ENCODE measurements at regions of chr3 and their contacts with region 1.

Region 1: GRCh38 chr3:14410503-14411165 is 8.2 kb downstream of the SLC6A6 start:
- DNase-seq: peak; percentile 61
- ATAC-seq: peak; percentile 64
- H3K4me3 ChIP-seq: no peak overlapping the region
- H3K27ac ChIP-seq: peak overlapping the region; percentile 61; the same call in 1 of the 2 replicates
- H3K4me1 ChIP-seq: peaks cover 64% of the 10 kb centered on the region
- H3K27me3 ChIP-seq: no peaks in the 10 kb centered on the region
- CTCF ChIP-seq: no peak

Region 2: GRCh38 chr3:14261229-14261628 is 149.4 kb before region 1 on chr3:
- CTCF ChIA-PET with region 1: no interaction called
- POLR2A ChIA-PET with region 1: interaction called, 9 read pairs
- in situ Hi-C with region 1: no loop called
- intact Hi-C with region 1: loop called (anchors 5 kb)
- DNase-seq: peak; percentile 61
- ATAC-seq: peak; percentile 67
- H3K4me3 ChIP-seq: no peak overlapping the region
- H3K27ac ChIP-seq: peak overlapping the region; percentile 85
- H3K4me1 ChIP-seq: peaks cover 48% of the 10 kb centered on the region
- H3K27me3 ChIP-seq: no peaks in the 10 kb centered on the region
- CTCF ChIP-seq: peak; percentile 92

Region 3: DNA sequence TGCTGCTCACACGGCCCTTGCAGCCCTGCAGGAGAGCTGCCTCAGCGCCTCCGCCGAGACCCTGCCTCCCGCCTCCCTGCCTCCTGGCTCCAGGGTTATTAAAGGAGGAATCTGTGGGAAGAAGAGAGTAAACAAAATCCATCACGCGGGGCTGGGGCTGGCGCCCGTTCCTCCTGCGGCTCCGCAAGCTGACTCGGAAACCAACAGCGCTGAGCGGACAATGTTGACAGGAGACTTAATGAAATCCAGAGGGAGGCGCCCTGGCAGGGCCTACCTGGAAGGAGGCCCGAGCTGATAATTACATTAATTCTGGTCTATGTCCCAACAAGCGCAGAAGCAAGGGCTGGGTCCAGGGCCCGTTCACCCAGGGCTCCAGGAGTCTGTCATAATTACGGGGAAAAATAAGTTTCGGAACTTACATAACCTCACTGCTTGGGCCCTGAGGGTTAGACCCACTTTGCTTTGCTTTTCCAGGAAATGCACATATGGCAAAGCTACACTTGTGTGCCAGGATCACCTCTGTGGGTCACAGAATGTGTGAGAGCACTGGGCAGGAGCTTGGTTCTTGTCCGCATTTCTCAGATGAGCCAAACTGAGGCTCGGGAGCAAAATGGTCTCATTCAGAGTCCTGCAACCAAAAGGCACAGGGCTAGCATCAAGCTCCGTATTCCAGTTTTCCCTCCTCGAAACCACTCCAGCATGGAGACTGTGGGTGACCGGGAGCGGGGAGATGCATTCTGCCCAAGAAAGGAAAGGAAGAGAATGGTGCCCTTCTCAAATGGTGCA is 52.0 kb before region 1 on chr3:
- CTCF ChIA-PET with region 1: no interaction called
- POLR2A ChIA-PET with region 1: interaction called, 11 read pairs
- in situ Hi-C with region 1: no loop called
- intact Hi-C with region 1: no loop called
- DNase-seq: no peak
- ATAC-seq: no peak
- H3K4me3 ChIP-seq: no peak overlapping the region
- H3K27ac ChIP-seq: no peak overlapping the region
- H3K4me1 ChIP-seq: no peaks in the 10 kb centered on the region
- H3K27me3 ChIP-seq: no peaks in the 10 kb centered on the region
- CTCF ChIP-seq: no peak

Region 4: GRCh38 chr3:14391033-14391432 is 19.6 kb before region 1 on chr3:
- CTCF ChIA-PET with region 1: no interaction called
- POLR2A ChIA-PET with region 1: no interaction called
- in situ Hi-C with region 1: no loop called
- intact Hi-C with region 1: no loop called
- DNase-seq: no peak
- ATAC-seq: no peak
- H3K4me3 ChIP-seq: no peak overlapping the region
- H3K27ac ChIP-seq: no peak overlapping the region
- H3K4me1 ChIP-seq: no peaks in the 10 kb centered on the region; the same call in 1 of the 2 replicates
- H3K27me3 ChIP-seq: no peaks in the 10 kb centered on the region
- CTCF ChIP-seq: no peak

Region 5: DNA sequence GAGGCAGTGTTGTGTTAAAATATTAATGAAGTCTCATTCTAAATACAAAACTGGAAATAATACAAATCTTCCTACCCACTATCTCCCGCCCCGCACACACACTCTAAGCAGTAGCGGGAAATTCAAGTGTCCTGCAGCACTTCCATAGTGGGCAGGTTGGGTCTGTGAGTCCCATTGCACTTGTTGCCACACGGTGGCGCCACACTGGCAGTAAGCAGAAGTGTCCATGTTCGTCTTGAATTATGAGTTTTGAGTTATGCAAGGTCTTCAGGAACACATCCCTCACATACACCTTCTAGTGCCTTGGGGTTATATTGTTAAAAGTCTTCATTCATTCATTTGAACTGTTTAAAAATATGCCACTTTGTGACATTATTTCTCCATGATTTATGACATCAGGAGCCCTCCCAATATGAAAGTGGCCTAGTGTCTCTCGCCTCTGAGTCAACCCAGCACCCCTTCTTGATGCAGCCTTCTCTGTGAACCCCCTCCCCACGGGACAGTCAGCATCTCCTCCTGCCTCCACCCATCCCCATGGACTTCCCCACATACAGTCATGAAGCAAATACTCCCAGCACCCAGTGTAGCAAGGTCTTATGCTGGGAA is 223.3 kb after region 1 on chr3:
- CTCF ChIA-PET with region 1: no interaction called
- POLR2A ChIA-PET with region 1: no interaction called
- in situ Hi-C with region 1: no loop called
- intact Hi-C with region 1: no loop called
- DNase-seq: peak; percentile 18
- ATAC-seq: peak; percentile 86
- H3K4me3 ChIP-seq: no peak overlapping the region
- H3K27ac ChIP-seq: no peak overlapping the region
- H3K4me1 ChIP-seq: no peaks in the 10 kb centered on the region
- H3K27me3 ChIP-seq: no peaks in the 10 kb centered on the region
- CTCF ChIP-seq: peak; percentile 77

Measured in Panc1 (cell line).